CD8-positive, alpha-beta T cell (primary cell): ENCODE measurements at regions of chr17 and their contacts with region 1.

Region 1: DNA sequence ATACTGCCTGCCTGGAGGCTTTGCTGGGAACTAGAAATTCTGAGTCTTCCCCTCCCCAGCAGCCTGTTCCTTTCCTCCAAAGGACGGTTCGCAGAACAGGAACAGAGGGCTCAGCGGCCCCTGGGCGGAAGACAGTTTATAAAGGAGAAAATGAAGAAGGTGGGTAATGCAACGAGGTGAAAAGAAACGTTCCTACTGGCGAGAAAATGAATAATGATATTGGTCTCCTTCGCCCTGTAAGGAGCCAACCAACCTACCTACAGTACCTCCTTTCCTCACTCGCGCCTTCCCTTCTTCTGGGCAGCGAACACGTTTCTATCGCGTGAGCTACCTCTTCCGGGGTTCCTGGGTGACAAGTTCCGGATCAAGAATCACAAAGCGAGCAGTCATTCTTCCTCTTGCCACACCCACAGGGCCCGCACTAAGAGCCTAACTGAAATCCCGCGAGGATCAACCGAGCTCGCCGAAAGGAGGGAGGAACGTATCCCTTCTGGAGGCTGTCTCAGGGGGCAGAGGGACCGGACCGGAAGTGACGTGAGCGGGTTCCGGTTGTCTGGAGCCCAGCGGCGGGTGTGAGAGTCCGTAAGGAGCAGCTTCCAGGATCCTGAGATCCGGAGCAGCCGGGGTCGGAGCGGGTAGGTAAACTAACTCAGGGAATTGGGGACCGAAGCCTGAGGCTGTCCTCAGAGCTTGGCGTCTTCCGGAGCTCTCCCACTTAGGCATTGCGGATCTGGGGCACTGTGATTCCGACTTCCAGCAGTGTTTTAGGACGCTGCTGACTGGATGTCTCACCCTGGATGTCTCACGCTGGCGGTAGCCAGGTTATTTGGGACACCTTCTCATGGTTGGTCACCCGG is at the starts of genes PTRH2 and VMP1:
- DNase-seq: peak; percentile 72 to 97 (median 87)
- ATAC-seq: peak; percentile 93
- H3K4me3 ChIP-seq: peak within 1 kb of the TSS; percentile 72 to 80
- H3K4me3 Mint-ChIP-seq: peak within 1 kb of the TSS; percentile 95
- H3K27ac ChIP-seq: peak within 1 kb of the TSS; percentile 80 to 94
- H3K27ac Mint-ChIP-seq: peak within 1 kb of the TSS; percentile 97
- H3K4me1 ChIP-seq: peaks cover 36% of the 10 kb centered on the region
- H3K4me1 Mint-ChIP-seq: peaks cover 63% of the 10 kb centered on the region
- H3K27me3 ChIP-seq: no peaks in the 10 kb centered on the region
- H3K27me3 Mint-ChIP-seq: no peaks in the 10 kb centered on the region
- CTCF ChIP-seq: no peak
- total RNA-seq, gene PTRH2: 6.1 to 7.6 TPM
- total RNA-seq, gene VMP1: 56.8 to 66.2 TPM

Region 2: DNA sequence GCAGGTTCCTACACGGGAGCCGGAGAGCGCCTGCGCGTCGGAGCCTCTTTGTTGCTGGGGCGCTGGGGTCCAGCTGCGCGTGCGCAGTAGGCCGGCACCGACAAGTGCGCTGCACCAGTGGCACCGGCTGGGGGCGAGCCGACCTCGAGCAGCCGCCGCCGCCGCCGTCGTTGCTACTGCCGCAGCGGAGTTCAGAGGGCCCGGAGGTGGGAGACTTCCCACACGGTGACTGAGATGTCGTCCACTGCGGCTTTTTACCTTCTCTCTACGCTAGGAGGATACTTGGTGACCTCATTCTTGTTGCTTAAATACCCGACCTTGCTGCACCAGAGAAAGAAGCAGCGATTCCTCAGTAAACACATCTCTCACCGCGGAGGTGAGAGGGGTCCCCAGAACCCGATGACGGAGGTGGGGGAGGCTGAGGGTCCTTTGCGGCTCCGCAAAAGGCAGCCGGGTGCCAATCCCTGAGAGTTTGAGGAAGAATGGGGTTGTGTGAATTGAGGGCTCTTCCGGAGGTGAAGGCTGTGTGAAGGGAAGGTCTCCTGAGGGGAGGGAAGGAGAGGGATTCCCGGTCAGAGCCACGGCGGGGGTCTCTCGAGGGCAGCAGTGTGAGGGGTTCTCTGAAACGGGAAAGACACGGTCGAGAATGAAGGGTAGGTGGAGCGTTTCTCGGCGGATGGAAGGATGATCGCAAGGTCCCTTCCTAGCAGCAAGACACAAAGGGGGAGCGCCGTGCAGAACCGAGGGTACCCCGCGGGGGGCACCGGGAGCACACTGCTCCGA is 486.8 kb before region 1 on chr17 and contains the start of gene GDPD1:
- CTCF ChIA-PET with region 1: no interaction called
- POLR2A ChIA-PET with region 1: no interaction called
- intact Hi-C with region 1: loop called in 1 of 2 experiments (anchors 10 kb)
- DNase-seq: peak; percentile 94 to 99 (median 97)
- ATAC-seq: peak; percentile 96
- H3K4me3 ChIP-seq: peak within 1 kb of the TSS; percentile 97 to 100
- H3K4me3 Mint-ChIP-seq: peak within 1 kb of the TSS; percentile 98
- H3K27ac ChIP-seq: peak within 1 kb of the TSS; percentile 91 to 92
- H3K27ac Mint-ChIP-seq: peak within 1 kb of the TSS; percentile 99
- H3K4me1 ChIP-seq: peaks cover 4% of the 10 kb centered on the region
- H3K4me1 Mint-ChIP-seq: peaks cover 13% of the 10 kb centered on the region
- H3K27me3 ChIP-seq: no peaks in the 10 kb centered on the region
- H3K27me3 Mint-ChIP-seq: no peaks in the 10 kb centered on the region
- CTCF ChIP-seq: peak; percentile 71
- total RNA-seq, gene GDPD1: 1.1 to 1.8 TPM

Region 3: DNA sequence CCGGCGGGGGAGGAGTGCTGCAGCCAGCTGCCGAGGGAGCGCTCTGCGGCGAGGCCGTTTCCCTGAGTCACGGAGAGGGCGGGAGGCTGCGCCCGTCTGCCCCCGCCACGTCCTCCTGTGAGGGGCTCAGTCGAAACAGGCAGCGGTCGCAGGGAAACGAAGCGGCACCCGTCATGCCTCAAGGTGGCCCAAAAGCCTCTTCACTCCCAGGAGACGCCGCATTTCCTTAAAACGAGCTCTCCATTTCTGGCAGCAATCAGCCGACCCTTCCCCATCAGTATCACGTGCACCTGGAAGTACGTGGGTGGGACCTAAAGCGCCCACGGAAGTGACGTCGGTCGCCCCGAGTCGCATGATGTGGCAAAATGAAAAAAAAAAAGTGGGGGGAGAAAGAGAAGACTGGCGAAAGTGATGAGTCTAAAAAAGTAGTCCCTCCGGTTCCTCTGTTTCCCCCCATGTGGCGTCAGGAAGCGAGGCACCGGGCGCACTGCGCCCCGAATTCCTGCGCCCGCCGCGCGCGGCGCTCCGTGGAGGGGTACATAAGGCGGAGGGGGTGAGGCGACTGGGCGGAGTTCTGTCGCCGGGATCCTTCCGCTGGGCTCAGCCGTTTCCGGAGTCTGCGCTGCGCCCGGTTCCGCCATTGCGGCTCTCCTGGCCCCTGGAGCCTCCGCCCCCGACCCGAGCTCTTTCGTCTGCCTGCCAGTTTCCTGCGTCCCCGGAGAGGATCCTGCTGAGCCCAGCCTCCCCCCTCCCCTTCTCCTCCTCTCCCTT is 87.9 kb before region 1 on chr17 and contains the start of gene CLTC:
- CTCF ChIA-PET with region 1: no interaction called
- POLR2A ChIA-PET with region 1: interaction called, 7 read pairs
- intact Hi-C with region 1: loop called (anchors 1 kb)
- DNase-seq: peak; percentile 83 to 98 (median 90)
- ATAC-seq: peak; percentile 82
- H3K4me3 ChIP-seq: peak within 1 kb of the TSS; percentile 98 to 99
- H3K4me3 Mint-ChIP-seq: peak within 1 kb of the TSS; percentile 96
- H3K27ac ChIP-seq: peak within 1 kb of the TSS; percentile 91 to 99
- H3K27ac Mint-ChIP-seq: peak within 1 kb of the TSS; percentile 98
- H3K4me1 ChIP-seq: peaks cover 37% of the 10 kb centered on the region
- H3K4me1 Mint-ChIP-seq: peaks cover 48% of the 10 kb centered on the region
- H3K27me3 ChIP-seq: no peaks in the 10 kb centered on the region
- H3K27me3 Mint-ChIP-seq: no peaks in the 10 kb centered on the region
- CTCF ChIP-seq: no peak
- total RNA-seq, gene CLTC: 73.4 to 86.0 TPM

Region 4: DNA sequence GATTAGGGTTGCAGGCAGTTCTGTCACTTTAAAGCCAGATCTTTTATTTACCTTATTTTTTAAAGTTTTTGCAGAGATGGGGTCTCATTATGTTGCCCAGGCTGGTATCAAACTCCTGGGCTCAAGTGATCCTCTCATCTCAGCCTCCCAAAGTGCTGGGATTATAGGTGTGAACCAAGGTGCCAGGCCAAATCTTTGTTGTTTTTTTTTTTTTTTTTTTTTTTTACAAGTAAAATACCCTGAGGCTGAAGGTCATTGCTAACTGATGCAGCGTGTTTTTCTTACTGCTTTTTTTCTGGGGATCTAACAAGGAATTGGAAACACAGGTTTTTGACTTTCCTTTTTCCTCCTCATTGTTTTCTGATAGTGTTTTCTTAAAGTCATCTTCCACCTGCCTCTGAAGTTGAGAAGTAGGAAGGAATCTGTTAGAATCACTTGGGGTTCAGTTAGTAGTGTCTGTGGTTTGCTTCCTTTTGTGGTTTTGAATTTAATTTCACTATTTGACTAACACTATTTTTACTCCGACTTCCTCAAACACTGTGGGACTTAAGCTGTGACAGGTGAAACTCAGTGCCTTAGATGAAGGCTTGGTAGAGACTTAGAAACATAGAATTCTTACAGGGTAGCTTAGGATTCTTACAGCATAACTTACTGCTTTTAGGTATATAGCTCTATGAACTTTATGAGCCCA is 65.4 kb before region 1 on chr17:
- CTCF ChIA-PET with region 1: no interaction called
- POLR2A ChIA-PET with region 1: no interaction called
- intact Hi-C with region 1: no loop called
- DNase-seq: peak in 2 of 9 experiments; percentile 34 to 62
- ATAC-seq: peak; percentile 80
- H3K4me3 ChIP-seq: no peak overlapping the region
- H3K4me3 Mint-ChIP-seq: peak overlapping the region; percentile 29
- H3K27ac ChIP-seq: peak overlapping the region in 1 of 2 experiments; percentile 12
- H3K27ac Mint-ChIP-seq: peak overlapping the region; percentile 30
- H3K4me1 ChIP-seq: peaks cover 32% of the 10 kb centered on the region
- H3K4me1 Mint-ChIP-seq: peaks cover 62% of the 10 kb centered on the region
- H3K27me3 ChIP-seq: no peaks in the 10 kb centered on the region
- H3K27me3 Mint-ChIP-seq: no peaks in the 10 kb centered on the region
- CTCF ChIP-seq: no peak

Region 5: DNA sequence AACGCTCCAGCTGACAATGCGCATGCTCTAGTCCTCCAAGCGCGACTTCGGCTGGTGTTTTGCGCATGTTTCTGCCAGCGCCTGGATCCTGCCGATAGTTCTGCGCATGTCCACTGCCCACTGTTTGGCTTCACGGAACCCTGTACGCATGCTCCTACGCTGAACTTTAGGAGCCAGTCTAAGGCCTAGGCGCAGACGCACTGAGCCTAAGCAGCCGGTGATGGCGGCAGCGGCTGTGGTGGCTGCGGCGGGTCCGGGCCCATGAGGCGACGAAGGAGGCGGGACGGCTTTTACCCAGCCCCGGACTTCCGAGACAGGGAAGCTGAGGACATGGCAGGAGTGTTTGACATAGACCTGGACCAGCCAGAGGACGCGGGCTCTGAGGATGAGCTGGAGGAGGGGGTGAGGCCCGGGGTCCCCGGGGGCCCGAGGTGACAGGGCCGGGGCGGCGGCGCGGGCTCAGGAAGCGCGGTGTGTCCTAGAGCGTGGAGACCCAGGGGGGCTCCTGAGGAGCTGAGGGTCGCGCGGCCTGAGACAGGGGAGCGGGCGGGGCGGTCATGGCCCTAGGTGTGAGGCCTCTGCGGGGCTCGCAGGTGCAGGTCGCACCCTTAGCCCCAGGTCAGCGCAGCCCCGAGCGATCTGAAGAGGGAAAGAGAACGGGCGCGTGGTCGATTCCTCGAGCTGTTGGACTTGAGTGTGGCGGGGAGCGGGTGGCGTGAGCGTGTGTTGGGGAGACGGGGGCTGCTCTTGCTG is 185.8 kb after region 1 on chr17 and contains the starts of genes RPS6KB1 and TUBD1:
- CTCF ChIA-PET with region 1: no interaction called
- POLR2A ChIA-PET with region 1: interaction called, 8 read pairs
- intact Hi-C with region 1: loop called (anchors 1 to 2 kb)
- DNase-seq: peak; percentile 94 to 100 (median 97)
- ATAC-seq: peak; percentile 91
- H3K4me3 ChIP-seq: peak within 1 kb of the TSS; percentile 66 to 82
- H3K4me3 Mint-ChIP-seq: peak within 1 kb of the TSS; percentile 100
- H3K27ac ChIP-seq: peak within 1 kb of the TSS; percentile 89 to 93
- H3K27ac Mint-ChIP-seq: peak within 1 kb of the TSS; percentile 100
- H3K4me1 ChIP-seq: peaks cover 37% of the 10 kb centered on the region
- H3K4me1 Mint-ChIP-seq: peaks cover 56% of the 10 kb centered on the region
- H3K27me3 ChIP-seq: no peaks in the 10 kb centered on the region
- H3K27me3 Mint-ChIP-seq: no peaks in the 10 kb centered on the region
- CTCF ChIP-seq: no peak
- total RNA-seq, gene RPS6KB1: 153 to 171 TPM
- total RNA-seq, gene TUBD1: 9.7 to 11.0 TPM

Region 6: DNA sequence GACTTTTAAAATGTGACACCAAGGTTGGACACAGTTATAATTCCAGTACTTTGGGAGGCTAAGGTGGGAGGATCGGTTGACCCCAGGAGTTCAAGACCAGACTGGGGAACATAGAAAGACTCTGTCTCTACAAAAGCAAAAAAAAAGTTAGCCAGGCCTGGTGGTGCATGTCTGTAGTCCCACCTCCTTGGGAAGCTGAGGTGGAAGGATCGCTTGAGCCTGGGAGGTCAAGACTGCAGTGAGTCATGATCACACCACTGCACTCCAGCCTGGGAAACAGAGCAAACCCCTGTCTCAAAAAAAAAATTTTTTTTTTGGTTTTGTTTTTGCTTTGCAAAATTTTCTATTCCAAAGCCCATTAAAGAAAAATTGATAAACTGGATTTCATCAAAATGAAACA is 1251.7 kb after region 1 on chr17:
- CTCF ChIA-PET with region 1: no interaction called
- POLR2A ChIA-PET with region 1: no interaction called
- intact Hi-C with region 1: no loop called
- DNase-seq: no peak
- ATAC-seq: no peak
- H3K4me3 ChIP-seq: no peak overlapping the region
- H3K4me3 Mint-ChIP-seq: no peak overlapping the region
- H3K27ac ChIP-seq: no peak overlapping the region
- H3K27ac Mint-ChIP-seq: no peak overlapping the region
- H3K4me1 ChIP-seq: no peaks in the 10 kb centered on the region
- H3K4me1 Mint-ChIP-seq: no peaks in the 10 kb centered on the region
- H3K27me3 ChIP-seq: no peaks in the 10 kb centered on the region
- H3K27me3 Mint-ChIP-seq: no peaks in the 10 kb centered on the region
- CTCF ChIP-seq: no peak